ENCODE measurements at regions of chr2 and their contacts with region 1.

Region 1: DNA sequence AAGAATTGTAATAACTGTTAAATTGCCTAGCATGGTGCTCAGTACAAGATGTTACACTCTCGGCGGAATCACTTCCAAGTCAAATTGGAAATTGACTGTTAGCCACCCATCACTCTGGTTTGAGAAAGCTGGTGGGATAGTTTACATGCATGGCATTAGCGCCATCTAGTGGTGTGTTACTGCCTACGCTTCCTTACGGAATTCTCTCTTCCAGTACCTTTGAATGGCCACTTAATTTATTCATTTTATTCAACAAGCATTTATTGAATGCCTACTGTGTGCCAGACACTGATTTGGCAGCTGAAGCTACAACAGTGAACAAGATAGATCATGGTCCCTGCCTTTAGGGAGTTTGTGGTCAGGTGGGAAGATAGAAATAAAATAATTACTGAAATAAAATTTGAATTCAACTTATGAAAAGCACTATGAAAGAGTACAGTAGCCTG is 171.2 kb downstream of the TMEM247 start:
- H3K4me3 Mint-ChIP-seq: no peak overlapping the region
- H3K27ac Mint-ChIP-seq: no peak overlapping the region
- H3K4me1 Mint-ChIP-seq: peaks cover 16% of the 10 kb centered on the region
- H3K27me3 Mint-ChIP-seq: peaks cover 5% of the 10 kb centered on the region

Region 2: GRCh38 chr2:45993476-45993991 is 657.0 kb before region 1 on chr2:
- intact Hi-C with region 1: loop called (anchors 1 kb)
- H3K4me3 Mint-ChIP-seq: no peak overlapping the region
- H3K27ac Mint-ChIP-seq: no peak overlapping the region
- H3K4me1 Mint-ChIP-seq: peaks cover 6% of the 10 kb centered on the region
- H3K27me3 Mint-ChIP-seq: no peaks in the 10 kb centered on the region

Region 3: DNA sequence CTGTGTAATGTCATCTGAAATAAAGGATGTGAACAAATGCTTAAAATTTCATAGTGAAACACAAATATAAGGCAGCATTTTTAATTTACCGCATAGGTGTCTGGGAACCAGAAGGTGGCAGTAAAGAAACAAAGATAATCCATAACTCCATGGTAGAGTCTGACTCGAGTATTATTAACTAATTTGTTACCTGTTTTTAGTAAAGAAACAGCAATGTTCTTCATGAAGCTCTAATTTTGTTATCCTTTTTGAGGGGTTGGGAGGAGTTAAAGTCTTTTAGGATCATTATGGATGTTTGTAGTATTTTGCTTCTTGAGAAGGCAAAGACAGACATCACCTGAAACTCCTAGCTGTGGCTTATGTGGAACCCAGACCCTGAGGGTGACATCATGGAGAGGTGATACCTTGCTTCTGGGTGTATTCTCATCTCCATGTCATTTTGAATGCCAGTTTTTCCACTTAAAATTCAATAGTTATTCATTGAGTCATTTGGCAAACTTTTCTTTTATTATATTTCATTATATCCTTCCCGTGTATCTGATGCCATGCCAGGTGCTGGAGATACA is 639.6 kb before region 1 on chr2:
- intact Hi-C with region 1: loop called (anchors 5 kb)
- H3K4me3 Mint-ChIP-seq: no peak overlapping the region
- H3K27ac Mint-ChIP-seq: no peak overlapping the region
- H3K4me1 Mint-ChIP-seq: no peaks in the 10 kb centered on the region
- H3K27me3 Mint-ChIP-seq: no peaks in the 10 kb centered on the region

Region 4: GRCh38 chr2:46722142-46722541 is 71.6 kb after region 1 on chr2:
- intact Hi-C with region 1: no loop called
- H3K4me3 Mint-ChIP-seq: no peak overlapping the region
- H3K27ac Mint-ChIP-seq: no peak overlapping the region
- H3K4me1 Mint-ChIP-seq: peaks cover 39% of the 10 kb centered on the region
- H3K27me3 Mint-ChIP-seq: no peaks in the 10 kb centered on the region

Measured in dendritic cell treated with granulocyte-macrophage colony-stimulating factor and Interleukin-4, amounts not matched to agents 40 ng/mL and 50 ng/mL, for 4 days (primary cell).